K562 (cell line): ENCODE measurements at regions of chr6 and their contacts with region 1.

Region 1: GRCh38 chr6:32700391-32701040 is 34.1 kb upstream of the HLA-DQB1 start:
- DNase-seq: peak; percentile 19 to 72 (median 40)
- ATAC-seq: peak; percentile 82
- H3K4me3 ChIP-seq: no peak overlapping the region
- H3K27ac ChIP-seq: no peak overlapping the region
- H3K4me1 ChIP-seq: no peaks in the 10 kb centered on the region
- H3K27me3 ChIP-seq: peaks cover 0 to 9% of the 10 kb centered on the region in 2 experiments; a peak in 2 of 5 replicates
- CTCF ChIP-seq: peak; percentile 66 to 81 (median 78)
- EP300 ChIP-seq: no peak
- POLR2A ChIP-seq: no peak
- RAD21 ChIP-seq: peak; percentile 80 to 84

Region 2: GRCh38 chr6:32102255-32102654 is 598.3 kb before region 1 on chr6:
- CTCF ChIA-PET with region 1: no interaction called
- POLR2A ChIA-PET with region 1: no interaction called
- in situ Hi-C with region 1: no loop called
- intact Hi-C with region 1: loop called (anchors 5 kb)
- DNase-seq: no peak
- ATAC-seq: no peak
- H3K4me3 ChIP-seq: no peak overlapping the region
- H3K27ac ChIP-seq: no peak overlapping the region
- H3K4me1 ChIP-seq: peaks cover 0 to 1% of the 10 kb centered on the region in 2 experiments; a peak in 1 of 5 replicates
- H3K27me3 ChIP-seq: peaks cover 16 to 64% of the 10 kb centered on the region in 2 experiments; a peak in 3 of 5 replicates
- CTCF ChIP-seq: no peak
- EP300 ChIP-seq: no peak
- POLR2A ChIP-seq: no peak
- RAD21 ChIP-seq: no peak

Region 3: DNA sequence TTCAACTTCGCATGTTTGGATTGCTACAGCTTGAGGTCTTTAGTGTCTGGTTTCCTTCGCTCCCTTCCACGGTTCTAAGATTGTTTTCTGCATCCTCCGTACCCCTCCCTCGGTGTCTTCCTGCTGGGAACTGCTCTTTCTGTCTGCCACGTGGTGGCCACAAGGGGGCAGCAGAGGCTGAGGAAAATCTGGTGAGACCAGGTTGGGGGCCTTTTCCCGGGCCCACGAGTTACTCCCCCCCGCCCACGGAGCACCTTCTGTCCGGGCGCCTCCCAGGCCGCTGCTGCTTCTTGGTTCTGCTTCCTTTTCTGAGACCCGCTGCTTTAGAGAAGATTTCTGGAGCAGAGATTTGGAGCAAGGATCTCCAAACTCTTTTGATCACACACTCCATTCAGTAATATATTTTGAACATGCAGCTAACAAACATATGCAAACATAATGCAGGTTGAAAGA is 455.5 kb before region 1 on chr6:
- CTCF ChIA-PET with region 1: no interaction called
- POLR2A ChIA-PET with region 1: no interaction called
- in situ Hi-C with region 1: no loop called
- intact Hi-C with region 1: loop called (anchors 5 kb)
- DNase-seq: peak; percentile 90 to 97 (median 96)
- ATAC-seq: peak; percentile 97
- H3K4me3 ChIP-seq: no peak overlapping the region
- H3K27ac ChIP-seq: no peak overlapping the region
- H3K4me1 ChIP-seq: no peaks in the 10 kb centered on the region
- H3K27me3 ChIP-seq: peaks cover 5 to 13% of the 10 kb centered on the region in 2 experiments; a peak in 4 of 5 replicates
- CTCF ChIP-seq: peak; percentile 91 to 95 (median 95)
- EP300 ChIP-seq: peak; percentile 37; the same call in 1 of the 2 replicates
- POLR2A ChIP-seq: no peak
- RAD21 ChIP-seq: peak; percentile 87 to 90

Region 4: GRCh38 chr6:32413427-32414047 is 287.0 kb before region 1 on chr6:
- CTCF ChIA-PET with region 1: interaction called, 58 read pairs
- POLR2A ChIA-PET with region 1: no interaction called
- in situ Hi-C with region 1: loop called (anchors 5 kb)
- intact Hi-C with region 1: loop called (anchors 1 kb)
- DNase-seq: peak; percentile 78 to 86 (median 82)
- ATAC-seq: peak; percentile 95
- H3K4me3 ChIP-seq: no peak overlapping the region
- H3K27ac ChIP-seq: no peak overlapping the region
- H3K4me1 ChIP-seq: no peaks in the 10 kb centered on the region
- H3K27me3 ChIP-seq: peaks cover 2 to 16% of the 10 kb centered on the region in 2 experiments; a peak in 4 of 5 replicates
- CTCF ChIP-seq: peak; percentile 89 to 95 (median 94)
- EP300 ChIP-seq: no peak
- POLR2A ChIP-seq: no peak
- RAD21 ChIP-seq: peak; percentile 87 to 95

Region 5: GRCh38 chr6:32432050-32432450 is 268.5 kb before region 1 on chr6:
- CTCF ChIA-PET with region 1: interaction called, 12 read pairs
- POLR2A ChIA-PET with region 1: no interaction called
- in situ Hi-C with region 1: no loop called
- intact Hi-C with region 1: loop called (anchors 5 kb)
- DNase-seq: peak in 2 of 4 experiments; percentile 22 to 29
- ATAC-seq: no peak
- H3K4me3 ChIP-seq: no peak overlapping the region
- H3K27ac ChIP-seq: no peak overlapping the region
- H3K4me1 ChIP-seq: no peaks in the 10 kb centered on the region
- H3K27me3 ChIP-seq: no peaks in the 10 kb centered on the region
- CTCF ChIP-seq: peak in 2 of 3 experiments; percentile 30 to 72; a peak in 3 of 6 replicates
- EP300 ChIP-seq: no peak
- POLR2A ChIP-seq: no peak
- RAD21 ChIP-seq: peak; percentile 81 to 82

Region 6: GRCh38 chr6:32685603-32686002 is 14.9 kb before region 1 on chr6:
- CTCF ChIA-PET with region 1: no interaction called
- POLR2A ChIA-PET with region 1: no interaction called
- in situ Hi-C with region 1: no loop called
- intact Hi-C with region 1: no loop called
- DNase-seq: no peak
- ATAC-seq: no peak
- H3K4me3 ChIP-seq: no peak overlapping the region
- H3K27ac ChIP-seq: no peak overlapping the region
- H3K4me1 ChIP-seq: no peaks in the 10 kb centered on the region
- H3K27me3 ChIP-seq: 0 out of 5 replicates have a peak, but pooled peaks cover 0 to 2% of the 10 kb centered on the region in 2 experiments
- CTCF ChIP-seq: no peak
- EP300 ChIP-seq: no peak
- POLR2A ChIP-seq: no peak
- RAD21 ChIP-seq: no peak

Region 7: DNA sequence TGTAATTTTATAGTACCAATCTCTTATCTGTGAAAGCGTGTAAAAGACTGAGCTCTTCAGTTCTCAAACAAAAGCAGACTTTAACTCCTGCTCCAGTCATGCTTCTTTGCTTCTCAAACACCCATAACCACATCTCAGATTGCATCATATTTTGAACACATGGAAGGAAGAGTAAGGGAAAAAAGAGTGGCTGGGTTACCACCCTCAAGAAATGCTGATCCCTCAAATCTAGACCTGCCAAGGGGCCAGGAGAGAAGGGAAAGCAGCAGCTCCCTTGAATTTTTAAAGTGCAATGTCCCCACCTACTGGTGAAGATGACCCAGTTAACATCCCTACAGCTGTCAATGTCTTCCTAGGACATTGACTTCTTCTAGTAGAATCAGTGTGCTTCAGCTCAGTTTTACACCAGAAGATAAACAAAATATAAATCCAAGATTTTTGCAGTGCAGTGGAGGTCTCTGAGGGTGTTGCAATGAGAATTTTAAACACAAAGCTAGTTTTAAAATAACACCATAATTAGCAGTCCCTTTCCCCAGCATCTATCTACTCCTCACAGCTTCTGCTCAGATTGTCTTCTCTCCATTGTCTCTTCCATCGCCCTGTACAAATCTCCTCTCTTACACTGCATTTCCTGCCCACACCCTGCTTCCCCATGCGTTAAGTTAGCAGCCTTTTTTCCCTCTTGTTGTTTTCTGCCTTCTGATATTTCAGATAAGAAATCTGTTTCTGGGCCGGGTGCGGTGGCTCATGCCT is 85.4 kb after region 1 on chr6:
- CTCF ChIA-PET with region 1: no interaction called
- POLR2A ChIA-PET with region 1: interaction called, 3 read pairs
- in situ Hi-C with region 1: no loop called
- intact Hi-C with region 1: loop called (anchors 5 kb)
- DNase-seq: peak; percentile 31 to 69 (median 52)
- ATAC-seq: peak; percentile 94
- H3K4me3 ChIP-seq: no peak overlapping the region
- H3K27ac ChIP-seq: no peak overlapping the region
- H3K4me1 ChIP-seq: no peaks in the 10 kb centered on the region
- H3K27me3 ChIP-seq: peaks cover 0 to 3% of the 10 kb centered on the region in 2 experiments; a peak in 2 of 5 replicates
- CTCF ChIP-seq: peak; percentile 73 to 81 (median 81)
- EP300 ChIP-seq: no peak
- POLR2A ChIP-seq: no peak
- RAD21 ChIP-seq: peak; percentile 71 to 89

Region 8: DNA sequence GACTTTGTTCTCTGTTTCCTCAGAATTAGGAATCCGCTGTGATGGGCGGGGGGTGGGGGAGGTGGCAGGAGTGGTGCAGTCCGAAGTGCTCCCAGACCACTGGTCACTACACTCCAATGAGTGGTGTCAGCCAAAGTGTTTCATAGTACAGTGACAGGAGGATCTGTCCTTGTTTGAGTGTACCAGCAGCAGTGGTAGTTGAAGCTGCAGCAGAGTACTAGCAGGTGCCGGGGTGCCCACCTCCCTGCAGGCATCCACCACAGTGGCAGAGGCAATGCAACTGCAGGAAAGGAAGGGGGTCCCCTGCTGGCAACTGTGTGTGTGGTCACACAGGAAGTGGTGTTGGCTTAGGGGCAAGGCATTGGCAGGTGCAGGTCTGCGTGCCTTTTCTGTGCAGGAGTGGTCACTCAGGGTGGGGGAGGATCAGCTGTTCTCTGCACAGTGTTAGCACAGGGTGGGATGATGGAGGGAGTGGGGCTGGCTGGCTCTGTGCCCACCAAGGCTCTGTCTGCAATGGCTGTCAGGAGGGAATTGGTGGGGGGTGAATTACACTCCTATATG is 106.6 kb after region 1 on chr6:
- CTCF ChIA-PET with region 1: no interaction called
- POLR2A ChIA-PET with region 1: no interaction called
- in situ Hi-C with region 1: no loop called
- intact Hi-C with region 1: no loop called
- DNase-seq: no peak
- ATAC-seq: no peak
- H3K4me3 ChIP-seq: no peak overlapping the region
- H3K27ac ChIP-seq: no peak overlapping the region
- H3K4me1 ChIP-seq: no peaks in the 10 kb centered on the region
- H3K27me3 ChIP-seq: peaks cover 4 to 11% of the 10 kb centered on the region in 2 experiments; a peak in 4 of 5 replicates
- CTCF ChIP-seq: 0 out of 6 replicates have a peak, but pooled peaks of 1 of the 3 experiments have one; percentile 12
- EP300 ChIP-seq: no peak
- POLR2A ChIP-seq: no peak
- RAD21 ChIP-seq: no peak